ENCODE measurements at regions of chr18 and their contacts with region 1.

Region 1: GRCh38 chr18:12839526-12840196 is 44.4 kb downstream of the PTPN2 start:
- DNase-seq: peak; percentile 52
- H3K4me3 Mint-ChIP-seq: peak overlapping the region; percentile 63
- H3K27ac Mint-ChIP-seq: peak overlapping the region; percentile 91
- H3K4me1 Mint-ChIP-seq: peaks cover 70% of the 10 kb centered on the region
- H3K27me3 Mint-ChIP-seq: no peaks in the 10 kb centered on the region

Region 2: GRCh38 chr18:12828116-12829051 is 11.3 kb before region 1 on chr18:
- intact Hi-C with region 1: loop called (anchors 1 kb)
- DNase-seq: no peak
- H3K4me3 Mint-ChIP-seq: no peak overlapping the region
- H3K27ac Mint-ChIP-seq: peak overlapping the region; percentile 38
- H3K4me1 Mint-ChIP-seq: peaks cover 30% of the 10 kb centered on the region
- H3K27me3 Mint-ChIP-seq: no peaks in the 10 kb centered on the region

Region 3: DNA sequence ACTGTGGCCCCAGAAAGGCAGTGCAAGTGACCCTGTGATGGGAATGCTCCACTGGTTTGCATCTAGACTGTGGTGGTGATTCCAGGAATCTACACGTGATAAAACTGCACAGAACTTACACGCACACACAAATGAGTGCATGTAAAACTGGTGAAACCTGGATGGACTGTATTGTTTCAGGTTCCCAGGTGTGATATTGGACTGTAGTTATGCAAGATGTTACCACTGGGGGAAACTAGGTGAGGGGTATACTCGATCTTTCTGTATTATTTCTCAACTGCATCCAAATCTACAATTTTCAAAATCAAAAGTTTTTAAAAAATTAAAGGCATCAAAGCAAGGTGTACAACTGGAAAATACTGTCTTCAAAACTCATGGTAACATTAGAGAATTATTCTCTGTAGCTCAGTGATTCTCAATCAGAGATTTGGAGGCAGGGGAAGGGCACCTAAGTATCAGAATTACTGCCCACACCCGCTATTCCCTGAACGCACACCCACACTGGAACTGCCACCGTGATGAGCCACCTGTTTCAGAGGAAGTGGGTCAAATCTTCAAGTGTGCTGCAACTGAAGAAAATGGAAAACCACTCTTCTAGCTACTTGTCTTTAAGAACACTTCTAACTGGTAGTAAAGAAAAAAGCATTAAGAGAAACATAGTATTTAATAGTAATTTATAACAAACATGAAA is 17.7 kb after region 1 on chr18:
- intact Hi-C with region 1: loop called (anchors 1 kb)
- DNase-seq: no peak
- H3K4me3 Mint-ChIP-seq: peak overlapping the region; percentile 24
- H3K27ac Mint-ChIP-seq: peak overlapping the region; percentile 39
- H3K4me1 Mint-ChIP-seq: peaks cover 64% of the 10 kb centered on the region
- H3K27me3 Mint-ChIP-seq: no peaks in the 10 kb centered on the region

Region 4: DNA sequence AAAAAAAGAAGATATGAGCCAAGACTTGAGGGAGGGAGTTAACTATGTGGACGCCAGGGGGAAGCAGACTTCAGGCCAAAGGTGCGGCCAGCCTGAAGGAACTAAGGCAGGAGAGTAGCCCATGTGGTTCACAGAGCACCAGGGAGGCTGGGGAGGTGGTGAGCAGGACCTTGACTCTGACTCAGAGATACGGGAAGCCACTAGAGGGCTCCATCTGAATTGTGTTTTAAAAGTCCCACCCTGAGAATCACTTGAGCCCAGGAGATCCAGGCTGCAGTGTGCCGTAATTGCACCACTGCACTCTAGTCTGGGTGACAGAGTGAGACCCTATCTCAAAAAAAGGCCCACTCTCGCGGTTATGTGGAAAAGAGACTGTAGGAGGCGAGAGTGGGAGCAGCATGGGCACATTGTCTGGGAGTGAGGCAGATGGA is 163.8 kb after region 1 on chr18:
- intact Hi-C with region 1: no loop called
- DNase-seq: no peak
- H3K4me3 Mint-ChIP-seq: no peak overlapping the region
- H3K27ac Mint-ChIP-seq: no peak overlapping the region
- H3K4me1 Mint-ChIP-seq: peaks cover 30% of the 10 kb centered on the region
- H3K27me3 Mint-ChIP-seq: no peaks in the 10 kb centered on the region

Measured in activated T-helper 2 cell treated with anti-CD3 and anti-CD28 coated beads, Interferon-gamma antibody, Interleukin-2, Interleukin-4, amounts not matched to agents 10 μg/mL and 5 μg/mL and 100 μg/mL, durations not matched to agents 14 hours and 24 hours and 36 hours (primary cell).